AG04449 (cell line): ENCODE measurements at regions of chr7 and their contacts with region 1.

Region 1: DNA sequence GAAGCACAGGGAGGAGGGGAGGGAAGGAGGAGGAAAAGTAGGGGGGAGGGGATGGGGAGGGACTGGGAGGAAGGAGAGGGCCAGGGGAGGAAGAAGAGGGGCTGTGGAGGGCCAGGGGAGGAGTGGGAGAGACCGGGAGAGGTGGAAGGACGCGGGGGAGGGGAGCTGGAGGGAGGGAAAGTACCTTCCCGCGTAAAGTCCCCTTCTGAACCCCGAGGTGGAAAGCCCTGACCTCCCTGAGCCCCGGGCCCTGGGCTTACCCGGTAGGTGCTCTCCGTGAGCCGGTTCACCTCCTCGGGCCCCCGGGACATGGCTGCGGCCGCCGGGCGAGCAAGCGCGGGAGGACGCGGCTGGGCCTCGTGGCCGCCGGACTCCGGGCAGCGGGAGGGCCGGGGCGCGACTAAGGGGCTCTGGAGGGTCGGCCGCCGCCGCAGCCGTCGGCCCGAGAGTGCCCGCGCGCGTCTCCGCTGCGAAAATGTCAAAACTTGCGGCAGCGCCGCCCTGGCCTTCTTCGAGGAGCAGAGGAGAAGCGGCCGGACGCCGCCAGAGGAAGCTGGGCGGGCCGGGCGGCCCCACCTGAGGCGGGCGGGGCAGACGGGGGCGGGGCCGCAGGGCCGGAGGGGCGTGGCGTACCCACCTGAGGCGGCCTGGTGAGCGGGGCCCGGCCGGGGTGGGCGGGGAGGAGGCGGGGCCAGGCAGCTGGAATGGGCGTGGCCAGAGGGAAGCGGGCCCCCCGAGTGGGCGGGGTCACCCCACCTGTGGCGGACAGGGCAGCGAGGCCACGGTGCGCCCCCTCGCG is at the start of gene BAIAP2L1:
- DNase-seq: no peak
- H3K4me3 ChIP-seq: peak within 1 kb of the TSS; percentile 72
- CTCF ChIP-seq: no peak

Region 2: DNA sequence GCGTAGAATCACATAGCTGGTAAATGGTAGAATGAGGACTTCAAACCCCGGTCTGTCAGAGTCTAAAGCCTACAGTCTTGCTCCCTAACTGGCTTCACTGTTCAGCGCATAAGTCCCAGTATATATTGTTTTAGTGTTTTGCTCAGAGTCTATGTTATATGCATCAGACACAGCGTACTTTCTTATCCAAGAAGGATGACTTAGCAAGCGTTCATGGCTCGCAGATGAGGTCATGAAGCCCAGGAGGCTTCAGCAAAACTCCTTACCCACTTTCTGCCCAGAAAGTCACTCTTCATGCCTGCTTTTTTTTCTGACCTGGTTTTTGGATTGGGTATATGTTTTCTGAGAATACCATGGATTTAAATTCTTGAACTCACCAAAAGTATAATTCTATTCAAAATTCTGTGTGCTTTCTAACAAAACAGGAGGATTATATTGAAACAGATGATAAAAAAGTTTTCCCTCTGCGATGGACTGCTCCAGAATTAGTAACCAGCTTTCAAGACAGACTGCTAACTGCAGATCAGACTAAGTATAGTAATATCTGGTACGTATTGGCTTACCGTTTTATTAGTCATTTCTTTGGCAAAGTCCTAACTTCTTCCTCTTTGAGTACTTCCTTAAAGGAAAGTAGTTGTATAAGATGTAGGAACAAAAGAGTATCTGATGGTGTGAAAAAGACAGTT is 214.1 kb before region 1 on chr7:
- CTCF ChIA-PET with region 1: no interaction called
- POLR2A ChIA-PET with region 1: no interaction called
- DNase-seq: no peak
- H3K4me3 ChIP-seq: no peak overlapping the region
- CTCF ChIP-seq: no peak

Region 3: DNA sequence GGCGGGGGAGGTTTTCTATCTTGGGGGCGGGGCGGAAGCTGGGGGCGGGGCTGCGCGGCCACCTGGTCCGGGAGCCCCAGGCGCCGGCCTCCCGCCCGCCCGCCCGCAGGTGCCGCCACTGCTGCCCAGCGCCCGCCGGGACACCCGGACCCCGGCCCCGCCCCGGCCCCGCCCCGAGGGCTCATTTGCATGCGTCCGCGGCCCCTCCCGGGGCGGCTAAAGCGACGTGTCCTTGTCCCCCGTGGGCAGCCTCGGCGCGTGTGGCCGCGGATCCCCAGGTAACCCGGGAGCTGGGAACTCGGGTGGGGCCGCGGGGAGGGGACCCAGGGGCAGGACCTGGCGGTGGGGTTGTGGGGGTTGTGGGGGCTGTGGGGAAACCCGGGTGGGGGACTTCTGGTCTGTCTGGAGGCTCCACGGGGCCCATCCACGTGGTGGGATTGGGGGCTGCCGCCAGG is 189.5 kb before region 1 on chr7 and contains the start of gene BHLHA15:
- CTCF ChIA-PET with region 1: no interaction called
- POLR2A ChIA-PET with region 1: no interaction called
- DNase-seq: no peak
- H3K4me3 ChIP-seq: peak within 1 kb of the TSS; percentile 46
- CTCF ChIP-seq: no peak

Region 4: DNA sequence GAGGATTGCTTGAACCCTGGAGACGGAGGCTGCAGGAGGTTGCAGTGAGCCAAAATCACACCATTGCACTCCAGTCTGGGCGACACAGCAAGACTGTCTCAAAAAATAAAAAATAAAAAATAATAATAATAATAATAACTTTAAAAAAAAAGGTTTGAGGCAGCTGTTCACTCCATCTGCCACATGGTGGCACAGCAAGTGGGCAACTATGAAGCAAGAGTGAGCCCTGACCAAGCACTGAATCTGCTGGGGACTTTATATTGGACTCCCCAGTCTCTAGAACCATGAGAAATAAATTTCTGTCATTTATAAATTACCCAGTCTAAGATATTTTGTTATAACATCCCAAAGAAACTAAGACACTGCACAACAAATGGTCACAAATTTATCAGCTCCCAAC is 133.9 kb before region 1 on chr7:
- CTCF ChIA-PET with region 1: interaction called, 13 read pairs
- POLR2A ChIA-PET with region 1: no interaction called
- DNase-seq: no peak
- H3K4me3 ChIP-seq: no peak overlapping the region
- CTCF ChIP-seq: peak; percentile 4

Region 5: GRCh38 chr7:98281757-98282606 is 118.8 kb before region 1 on chr7:
- CTCF ChIA-PET with region 1: interaction called, 18 read pairs
- POLR2A ChIA-PET with region 1: no interaction called
- DNase-seq: no peak
- H3K4me3 ChIP-seq: peak overlapping the region; percentile 83
- CTCF ChIP-seq: no peak

Region 6: GRCh38 chr7:98294796-98295382 is 105.9 kb before region 1 on chr7:
- CTCF ChIA-PET with region 1: interaction called, 57 read pairs
- POLR2A ChIA-PET with region 1: interaction called, 3 read pairs
- DNase-seq: no peak
- H3K4me3 ChIP-seq: no peak overlapping the region
- CTCF ChIP-seq: peak; percentile 80

Region 7: GRCh38 chr7:98300595-98301372 is 100.0 kb before region 1 on chr7:
- CTCF ChIA-PET with region 1: interaction called, 57 read pairs
- POLR2A ChIA-PET with region 1: interaction called, 3 read pairs
- DNase-seq: no peak
- H3K4me3 ChIP-seq: no peak overlapping the region
- CTCF ChIP-seq: no peak

Region 8: DNA sequence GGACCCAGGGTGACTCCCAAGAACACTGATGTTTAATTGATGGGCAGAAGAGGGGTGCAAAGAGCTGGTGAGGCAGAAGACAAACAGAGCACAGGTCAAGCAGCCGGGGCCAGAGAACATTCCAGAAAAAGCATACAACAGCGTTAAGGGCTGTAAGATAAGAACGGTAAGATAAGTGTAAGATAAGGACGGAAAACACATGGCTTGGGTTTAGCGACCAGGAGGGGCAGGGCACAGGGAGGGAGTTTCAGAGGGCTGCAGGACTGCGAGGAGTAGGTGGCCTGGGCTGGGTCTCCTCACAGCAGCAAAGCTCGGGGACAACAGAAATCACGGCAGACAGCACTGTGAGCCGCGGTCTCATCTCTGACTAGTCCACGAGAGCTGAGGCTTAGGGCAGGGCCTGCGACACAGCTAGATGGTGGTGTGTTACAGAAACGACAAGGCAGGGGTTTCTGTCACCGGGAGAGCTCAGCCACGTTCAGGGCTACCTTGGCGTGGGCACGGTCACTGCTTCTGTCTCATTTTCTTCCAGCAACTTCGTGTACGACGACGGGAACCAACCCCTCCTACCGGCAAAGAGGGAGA is 94.7 kb before region 1 on chr7:
- CTCF ChIA-PET with region 1: interaction called, 13 read pairs
- POLR2A ChIA-PET with region 1: interaction called, 3 read pairs
- DNase-seq: no peak
- H3K4me3 ChIP-seq: no peak overlapping the region
- CTCF ChIP-seq: no peak

Region 9: DNA sequence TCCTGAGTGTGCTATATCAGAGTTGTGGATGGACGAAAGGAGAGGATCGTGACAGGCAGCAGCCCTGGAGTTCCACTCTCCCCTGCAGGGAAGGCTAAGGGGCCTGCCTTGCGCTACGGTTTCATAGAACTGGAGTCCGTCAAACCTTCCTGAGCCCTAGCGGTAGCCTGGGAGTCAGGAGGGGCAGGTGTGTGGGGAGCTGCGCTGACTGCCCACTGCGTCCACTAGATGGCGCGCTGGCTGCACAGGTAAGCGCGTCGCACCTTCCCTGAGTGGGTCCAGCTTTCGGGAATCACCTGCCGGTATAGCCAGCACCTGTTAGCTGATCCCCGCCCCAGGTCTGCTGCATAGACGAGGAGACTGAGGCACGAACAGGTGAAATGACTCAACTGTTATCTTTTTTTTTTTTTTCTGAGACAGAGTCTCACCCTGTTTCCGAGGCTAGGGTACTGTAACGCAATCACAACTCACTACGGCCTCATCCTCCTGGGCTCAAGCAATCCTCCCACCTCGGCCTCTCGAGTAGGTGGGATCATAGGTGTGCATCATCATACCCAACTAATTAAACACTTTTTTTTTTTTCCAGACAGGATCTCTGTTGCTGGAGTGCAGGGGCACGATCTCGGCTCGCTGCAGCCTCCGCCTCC is 20.3 kb after region 1 on chr7:
- CTCF ChIA-PET with region 1: interaction called, 36 read pairs
- POLR2A ChIA-PET with region 1: no interaction called
- DNase-seq: no peak
- H3K4me3 ChIP-seq: no peak overlapping the region
- CTCF ChIP-seq: peak; percentile 96